CD8-positive, alpha-beta T cell (primary cell): ENCODE measurements at regions of chr3 and their contacts with region 1.

Region 1: GRCh38 chr3:15859507-15860013 is 61.8 kb upstream of the ANKRD28 start:
- DNase-seq: peak; percentile 42 to 88 (median 73)
- ATAC-seq: peak; percentile 78
- H3K4me3 ChIP-seq: peak overlapping the region; percentile 73 to 86
- H3K4me3 Mint-ChIP-seq: peak overlapping the region; percentile 97
- H3K27ac ChIP-seq: peak overlapping the region in 1 of 2 experiments; percentile 46
- H3K27ac Mint-ChIP-seq: peak overlapping the region; percentile 95
- H3K4me1 ChIP-seq: peaks cover 20% of the 10 kb centered on the region
- H3K4me1 Mint-ChIP-seq: peaks cover 35% of the 10 kb centered on the region
- H3K27me3 ChIP-seq: no peaks in the 10 kb centered on the region
- H3K27me3 Mint-ChIP-seq: no peaks in the 10 kb centered on the region
- CTCF ChIP-seq: no peak

Region 2: GRCh38 chr3:15601397-15602145 is 258.0 kb before region 1 on chr3 and contains the starts of genes BTD and HACL1:
- CTCF ChIA-PET with region 1: no interaction called
- POLR2A ChIA-PET with region 1: interaction called, 4 read pairs
- intact Hi-C with region 1: loop called (anchors 1 to 2 kb)
- DNase-seq: peak; percentile 96 to 100 (median 99)
- ATAC-seq: peak; percentile 89
- H3K4me3 ChIP-seq: peak within 1 kb of the TSS; percentile 82 to 94
- H3K4me3 Mint-ChIP-seq: peak within 1 kb of the TSS; percentile 100
- H3K27ac ChIP-seq: peak within 1 kb of the TSS; percentile 82 to 88
- H3K27ac Mint-ChIP-seq: peak within 1 kb of the TSS; percentile 99
- H3K4me1 ChIP-seq: peaks cover 19% of the 10 kb centered on the region
- H3K4me1 Mint-ChIP-seq: peaks cover 54% of the 10 kb centered on the region
- H3K27me3 ChIP-seq: no peaks in the 10 kb centered on the region
- H3K27me3 Mint-ChIP-seq: no peaks in the 10 kb centered on the region
- CTCF ChIP-seq: peak; percentile 24
- total RNA-seq, gene BTD: 9.1 to 11.3 TPM
- total RNA-seq, gene HACL1: 30.1 to 33.4 TPM